ENCODE measurements at regions of chr15 and their contacts with region 1.

Region 1: GRCh38 chr15:72199711-72200212 is 2.2 kb upstream of the GRAMD2A start:
- DNase-seq: peak; percentile 77
- ATAC-seq: peak; percentile 32
- H3K4me3 ChIP-seq: no peak overlapping the region
- H3K27ac ChIP-seq: no peak overlapping the region
- H3K4me1 ChIP-seq: no peaks in the 10 kb centered on the region
- H3K27me3 ChIP-seq: no peaks in the 10 kb centered on the region
- CTCF ChIP-seq: peak; percentile 87

Region 2: DNA sequence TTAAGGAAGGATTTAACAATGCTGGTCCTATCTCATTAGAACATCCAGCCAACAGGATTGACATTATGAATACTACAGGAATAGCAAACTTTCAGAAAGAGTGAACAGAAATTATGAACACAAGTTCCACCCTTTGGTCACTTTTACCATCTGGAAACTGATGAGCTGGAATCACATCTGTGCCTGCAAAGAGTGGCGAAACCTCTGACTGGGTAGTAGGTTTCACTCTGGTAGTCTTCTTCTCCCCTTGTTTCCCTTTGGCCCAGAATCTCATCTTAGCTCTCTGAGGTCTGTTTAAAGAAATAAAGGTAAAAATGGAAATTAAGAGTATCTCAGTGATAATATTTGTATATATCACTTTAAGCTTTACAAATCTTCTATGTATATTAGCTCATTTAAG is 316.3 kb before region 1 on chr15:
- CTCF ChIA-PET with region 1: no interaction called
- POLR2A ChIA-PET with region 1: no interaction called
- intact Hi-C with region 1: no loop called
- DNase-seq: no peak
- ATAC-seq: no peak
- H3K4me3 ChIP-seq: no peak overlapping the region
- H3K27ac ChIP-seq: no peak overlapping the region
- H3K4me1 ChIP-seq: no peaks in the 10 kb centered on the region
- H3K27me3 ChIP-seq: no peaks in the 10 kb centered on the region
- CTCF ChIP-seq: no peak

Region 3: GRCh38 chr15:72285927-72286516 is 86.3 kb after region 1 on chr15:
- CTCF ChIA-PET with region 1: no interaction called
- POLR2A ChIA-PET with region 1: no interaction called
- intact Hi-C with region 1: loop called (anchors 1 kb)
- DNase-seq: peak; percentile 59
- ATAC-seq: peak; percentile 80
- H3K4me3 ChIP-seq: no peak overlapping the region
- H3K27ac ChIP-seq: no peak overlapping the region
- H3K4me1 ChIP-seq: no peaks in the 10 kb centered on the region
- H3K27me3 ChIP-seq: no peaks in the 10 kb centered on the region
- CTCF ChIP-seq: peak; percentile 63

Region 4: DNA sequence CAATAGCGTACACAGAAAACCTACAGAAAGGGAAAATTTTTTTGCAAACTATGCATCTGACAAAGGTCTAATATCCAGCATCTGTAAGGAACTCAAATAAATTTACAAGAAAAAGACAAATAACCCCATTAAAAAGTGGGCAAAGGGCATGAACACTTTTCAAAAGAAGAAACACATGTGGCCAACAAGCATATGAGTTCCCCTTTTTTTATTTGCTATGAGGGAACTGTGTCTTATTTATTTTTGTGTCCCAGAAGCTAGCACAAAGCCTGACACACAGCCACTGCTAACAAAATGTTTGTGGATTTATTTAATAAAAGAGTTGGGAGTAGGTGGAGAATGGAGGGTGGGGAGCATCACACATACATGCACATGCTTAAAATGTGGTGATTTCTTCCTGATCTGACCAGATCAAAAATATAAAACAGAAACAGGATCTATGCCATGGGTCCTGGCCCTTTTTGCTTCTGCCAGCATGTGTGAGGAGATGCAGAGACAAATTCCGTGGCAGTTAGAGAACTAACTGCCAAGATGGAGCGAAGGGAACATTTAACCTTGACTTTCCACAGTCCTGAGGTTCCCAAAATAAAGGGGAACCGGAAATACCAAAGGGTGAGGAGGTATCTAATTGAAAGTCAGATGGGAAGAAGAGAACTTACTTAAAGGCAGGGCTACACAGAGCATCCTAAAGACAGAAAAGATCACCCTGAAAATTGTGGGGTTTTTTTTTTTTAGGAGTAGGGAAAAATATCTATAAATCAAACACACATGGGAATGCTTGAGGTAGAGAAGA is 198.2 kb after region 1 on chr15 and contains the start of gene TMEM202:
- CTCF ChIA-PET with region 1: no interaction called
- POLR2A ChIA-PET with region 1: no interaction called
- intact Hi-C with region 1: no loop called
- DNase-seq: no peak
- ATAC-seq: no peak
- H3K4me3 ChIP-seq: no peak within 1 kb of the TSS
- H3K27ac ChIP-seq: no peak within 1 kb of the TSS
- H3K4me1 ChIP-seq: no peaks in the 10 kb centered on the region
- H3K27me3 ChIP-seq: peaks cover 8% of the 10 kb centered on the region
- CTCF ChIP-seq: no peak
- total RNA-seq, gene TMEM202: not detected in 2 replicates

Measured in PC-3 (cell line).